Mammary epithelial cell (primary cell): ENCODE measurements at regions of chrX and their contacts with region 1.

Region 1: GRCh38 chrX:15471016-15471415 is 22.1 kb downstream of the PIR start:
- DNase-seq: peak; percentile 68
- H3K4me3 ChIP-seq: no peak overlapping the region
- H3K27ac ChIP-seq: peak overlapping the region; percentile 40
- H3K4me1 ChIP-seq: peaks cover 33% of the 10 kb centered on the region
- H3K27me3 ChIP-seq: no peaks in the 10 kb centered on the region
- CTCF ChIP-seq: peak; percentile 89 to 90

Region 2: DNA sequence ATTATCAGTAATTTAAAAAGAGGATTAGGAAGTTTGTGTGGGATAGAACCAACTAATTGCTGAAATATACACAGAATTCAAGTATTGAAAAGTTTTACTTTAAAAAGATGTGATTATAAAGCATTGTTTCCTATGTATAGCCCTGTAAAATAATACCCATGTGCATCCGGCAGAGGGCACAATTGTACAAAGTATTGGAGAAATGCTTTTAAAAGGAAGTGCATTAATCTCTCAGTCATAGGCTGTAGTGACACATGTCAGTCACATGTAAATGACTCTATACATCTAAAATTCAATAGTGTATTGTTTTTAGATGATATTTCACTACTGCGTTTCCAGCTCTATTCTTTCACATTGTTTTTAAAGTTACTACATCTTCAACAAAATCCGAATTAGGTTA is 1431.7 kb before region 1 on chrX:
- CTCF ChIA-PET with region 1: no interaction called
- dilution Hi-C with region 1: no loop called
- in situ Hi-C with region 1: no loop called
- intact Hi-C with region 1: loop called (anchors 1 kb)
- DNase-seq: peak; percentile 25
- H3K4me3 ChIP-seq: no peak overlapping the region
- H3K27ac ChIP-seq: no peak overlapping the region
- H3K4me1 ChIP-seq: peaks cover 4% of the 10 kb centered on the region
- H3K27me3 ChIP-seq: no peaks in the 10 kb centered on the region
- CTCF ChIP-seq: peak; percentile 71 to 72

Region 3: GRCh38 chrX:15349046-15349445 is 122.0 kb before region 1 on chrX:
- CTCF ChIA-PET with region 1: no interaction called
- dilution Hi-C with region 1: no loop called
- in situ Hi-C with region 1: loop called (anchors 5 kb)
- intact Hi-C with region 1: loop called (anchors 1 kb)
- DNase-seq: peak; percentile 64
- H3K4me3 ChIP-seq: no peak overlapping the region
- H3K27ac ChIP-seq: no peak overlapping the region
- H3K4me1 ChIP-seq: no peaks in the 10 kb centered on the region
- H3K27me3 ChIP-seq: no peaks in the 10 kb centered on the region
- CTCF ChIP-seq: peak; percentile 57 to 71

Region 4: DNA sequence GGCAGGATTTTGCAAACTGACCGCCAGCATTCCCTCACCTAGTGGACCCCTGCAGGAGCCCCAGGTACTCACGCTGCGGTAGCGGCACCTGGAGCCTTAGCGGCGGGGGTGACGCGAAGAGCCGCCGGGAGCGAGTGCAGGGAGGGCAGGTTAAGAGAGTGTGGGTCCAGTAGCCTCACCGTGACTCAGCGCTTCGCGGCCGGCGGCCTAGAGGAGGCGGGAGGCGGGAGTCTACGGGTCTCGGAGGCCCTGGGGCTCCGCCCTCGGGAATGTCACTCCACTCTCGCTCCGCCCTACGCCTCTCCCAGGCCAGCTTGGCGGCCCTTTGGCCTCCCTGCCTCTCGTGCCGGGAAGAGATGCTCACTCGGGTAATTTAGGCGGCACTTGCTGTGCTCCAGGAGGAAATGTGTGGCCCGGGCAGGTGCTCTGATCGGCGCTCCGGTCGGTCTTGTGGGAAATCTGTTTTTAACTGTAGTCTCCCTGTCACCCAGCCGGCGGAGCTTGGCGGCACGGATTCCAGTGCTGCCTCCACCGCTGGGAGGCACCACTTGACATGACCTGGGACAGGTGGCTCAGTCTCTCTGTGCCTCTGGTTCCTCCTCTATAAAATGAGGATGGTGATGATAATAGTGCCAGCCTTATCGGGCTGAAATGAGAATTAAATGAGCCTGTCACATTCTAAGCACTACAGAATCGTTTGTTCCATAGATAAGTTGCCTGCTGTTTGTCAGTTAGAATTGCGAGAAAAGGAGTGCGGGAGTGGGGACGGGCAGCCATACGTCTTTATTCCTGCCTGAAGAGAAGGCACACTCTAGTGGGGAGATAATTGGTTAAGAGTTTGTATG is 22.3 kb after region 1 on chrX and contains the start of gene PIR:
- CTCF ChIA-PET with region 1: no interaction called
- dilution Hi-C with region 1: no loop called
- in situ Hi-C with region 1: no loop called
- intact Hi-C with region 1: loop called (anchors 1 kb)
- DNase-seq: peak; percentile 95
- H3K4me3 ChIP-seq: peak within 1 kb of the TSS; percentile 53 to 70 (median 57)
- H3K27ac ChIP-seq: peak within 1 kb of the TSS; percentile 73
- H3K4me1 ChIP-seq: peaks cover 34% of the 10 kb centered on the region
- H3K27me3 ChIP-seq: no peaks in the 10 kb centered on the region
- CTCF ChIP-seq: peak; percentile 44 to 61
- total RNA-seq, gene PIR: 32.8 to 40.9 TPM

Region 5: DNA sequence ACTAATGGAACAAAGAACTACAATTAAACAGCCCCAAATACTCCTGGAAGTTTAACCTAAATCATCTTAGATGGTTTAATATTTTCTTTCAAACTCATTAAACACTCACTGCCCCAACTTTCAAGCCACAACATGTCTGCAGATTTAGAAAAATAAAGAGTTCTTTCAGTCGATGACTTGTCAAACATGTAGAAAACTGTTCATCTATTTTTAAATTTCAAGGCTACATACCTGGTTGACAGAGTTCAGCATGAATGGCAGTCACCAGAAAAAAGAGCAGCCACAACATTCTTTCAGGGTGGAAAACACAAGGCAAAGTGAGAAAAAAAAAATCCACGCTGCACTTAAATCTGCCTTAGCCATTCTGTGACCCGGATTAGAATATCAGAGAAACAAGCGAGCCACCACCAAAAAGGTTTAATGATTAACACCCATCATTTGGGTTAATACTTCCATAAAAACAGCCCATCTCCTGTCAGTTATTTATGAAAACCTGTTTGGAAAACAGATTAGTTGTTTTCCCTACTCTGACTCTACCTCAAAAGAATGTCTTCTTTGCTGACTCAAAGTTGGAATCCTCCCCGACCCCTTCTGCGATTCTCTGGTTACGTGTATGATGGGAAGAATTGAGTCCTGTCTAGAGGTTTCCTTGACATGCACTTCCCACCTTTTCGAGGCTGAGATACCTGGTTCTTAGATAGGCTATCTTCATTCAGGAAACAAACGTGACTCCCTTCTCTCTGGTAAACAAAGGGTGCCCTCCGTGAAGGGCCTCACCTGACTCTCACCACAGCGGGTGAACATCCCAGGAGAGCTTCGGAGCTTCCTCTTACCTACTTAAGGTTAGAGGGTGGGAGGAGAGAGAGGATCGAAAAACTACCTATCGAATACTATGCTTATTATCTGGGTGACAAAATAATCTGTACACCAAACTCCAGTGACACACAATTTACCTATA is 193.8 kb after region 1 on chrX and contains the start of gene CLTRN:
- CTCF ChIA-PET with region 1: no interaction called
- dilution Hi-C with region 1: no loop called
- in situ Hi-C with region 1: loop called (anchors 10 to 25 kb)
- intact Hi-C with region 1: loop called (anchors 5 kb)
- DNase-seq: peak; percentile 86
- H3K4me3 ChIP-seq: peak within 1 kb of the TSS in 2 of 3 experiments; percentile 12 to 40
- H3K27ac ChIP-seq: peak within 1 kb of the TSS; percentile 94
- H3K4me1 ChIP-seq: peaks cover 34% of the 10 kb centered on the region
- H3K27me3 ChIP-seq: no peaks in the 10 kb centered on the region
- CTCF ChIP-seq: no peak
- total RNA-seq, gene CLTRN: 2.0 to 2.2 TPM

Region 6: GRCh38 chrX:15838017-15838416 is 367.0 kb after region 1 on chrX:
- CTCF ChIA-PET with region 1: no interaction called
- dilution Hi-C with region 1: no loop called
- in situ Hi-C with region 1: no loop called
- intact Hi-C with region 1: no loop called
- DNase-seq: no peak
- H3K4me3 ChIP-seq: no peak overlapping the region
- H3K27ac ChIP-seq: no peak overlapping the region
- H3K4me1 ChIP-seq: no peaks in the 10 kb centered on the region
- H3K27me3 ChIP-seq: no peaks in the 10 kb centered on the region
- CTCF ChIP-seq: peak; percentile 12 to 23

Region 7: DNA sequence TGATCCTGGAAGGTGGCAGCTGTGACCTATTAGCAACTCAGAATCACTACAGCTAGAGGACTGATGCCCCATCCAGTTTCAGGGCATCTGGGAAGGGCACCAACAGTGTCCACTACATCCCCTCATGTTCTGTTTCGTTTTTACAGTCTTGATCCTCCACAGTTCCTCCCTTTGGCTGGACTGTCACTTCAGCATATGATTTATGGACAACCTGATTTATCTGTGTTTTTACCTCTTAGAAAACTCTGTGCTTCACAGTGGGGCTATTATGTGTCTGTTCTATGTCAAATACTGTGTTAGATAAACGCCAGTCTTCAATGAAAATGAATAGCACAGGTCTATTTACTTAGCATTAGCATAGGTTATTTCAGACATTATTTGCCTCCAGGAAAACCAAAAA is 589.2 kb after region 1 on chrX:
- CTCF ChIA-PET with region 1: no interaction called
- dilution Hi-C with region 1: no loop called
- in situ Hi-C with region 1: no loop called
- intact Hi-C with region 1: no loop called
- DNase-seq: no peak
- H3K4me3 ChIP-seq: no peak overlapping the region
- H3K27ac ChIP-seq: no peak overlapping the region
- H3K4me1 ChIP-seq: no peaks in the 10 kb centered on the region
- H3K27me3 ChIP-seq: no peaks in the 10 kb centered on the region
- CTCF ChIP-seq: no peak